Motor neuron (in vitro differentiated cells): ENCODE measurements at regions of chr17 and their contacts with region 1.

Region 1: GRCh38 chr17:8991514-8992285 is 26.2 kb upstream of the PIK3R5 start:
- ATAC-seq: peak in 7 of 8 experiments; percentile 39 to 96 (median 69)
- H3K4me3 ChIP-seq: no peak overlapping the region
- H3K27ac ChIP-seq: no peak overlapping the region
- H3K4me1 ChIP-seq: no peaks in the 10 kb centered on the region

Region 2: DNA sequence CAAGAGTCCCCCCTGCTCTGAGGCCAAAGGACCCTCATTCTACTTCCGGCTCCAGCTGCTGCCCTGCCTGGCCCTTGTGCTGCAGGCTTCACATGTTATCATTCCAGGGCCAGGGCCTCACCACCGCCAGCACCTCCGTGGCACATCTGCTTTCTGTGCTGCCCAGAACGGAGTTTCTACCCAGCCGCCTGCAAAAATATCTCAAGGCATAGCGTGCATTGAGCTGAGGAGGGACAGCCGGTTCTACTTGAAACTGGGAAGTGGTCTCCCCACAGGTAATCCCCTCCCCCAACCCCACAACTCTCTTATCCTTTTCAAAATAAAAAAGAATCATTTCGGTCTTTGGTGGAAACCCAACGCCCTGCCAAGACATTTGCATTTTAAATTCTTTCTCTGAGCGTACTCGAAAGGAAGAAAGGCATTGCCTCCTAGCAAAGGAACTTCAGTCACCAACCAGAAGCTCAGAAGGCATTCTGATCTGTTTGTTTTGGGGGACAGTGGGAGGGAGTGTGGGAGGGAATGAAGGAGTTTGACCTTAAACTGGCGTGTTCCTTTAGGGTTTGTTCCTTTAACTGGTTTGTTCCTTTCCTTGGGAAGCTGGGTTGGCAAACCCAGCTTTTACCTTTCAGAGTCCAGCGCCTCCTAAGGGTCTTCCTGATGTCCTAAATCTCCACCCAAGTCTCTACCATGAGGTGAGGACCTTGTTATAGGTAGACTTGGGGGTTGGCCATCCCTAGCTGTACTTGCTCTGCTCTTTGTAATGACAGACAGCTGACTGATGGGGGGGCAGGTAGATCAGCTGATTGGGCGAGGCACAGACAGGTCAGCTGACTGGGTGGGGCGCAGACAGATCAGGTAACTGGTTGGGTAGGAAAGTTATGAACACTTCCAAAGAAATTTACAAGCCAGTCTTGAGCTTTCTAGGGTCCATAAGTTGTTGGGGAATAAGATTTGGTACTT is 90.8 kb before region 1 on chr17:
- in situ Hi-C with region 1: loop called in 1 of 9 experiments (anchors 10 kb)
- ATAC-seq: peak in 1 of 8 experiments; percentile 39
- H3K4me3 ChIP-seq: no peak overlapping the region
- H3K27ac ChIP-seq: no peak overlapping the region
- H3K4me1 ChIP-seq: no peaks in the 10 kb centered on the region

Region 3: DNA sequence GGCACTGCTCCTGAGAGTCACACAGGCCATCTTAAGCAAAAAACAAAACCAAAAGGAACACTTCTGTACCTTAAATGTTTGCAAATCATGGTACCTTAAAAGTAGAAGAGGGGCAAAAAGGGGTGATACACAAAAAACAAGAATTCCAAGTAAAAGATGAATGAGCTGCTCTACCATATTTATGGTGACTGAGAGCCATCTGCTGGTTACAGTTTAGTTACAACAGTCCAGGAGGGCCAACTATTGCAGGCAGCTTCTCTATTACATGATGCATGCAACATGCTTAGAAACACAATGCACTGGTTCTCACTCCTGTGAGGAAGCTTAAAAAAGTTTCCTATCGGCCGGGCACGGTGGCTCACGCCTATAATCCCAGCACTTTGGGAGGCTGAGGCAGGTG is 530.4 kb after region 1 on chr17:
- in situ Hi-C with region 1: loop called in 6 of 9 experiments (anchors 25 kb)
- ATAC-seq: peak; percentile 26 to 89 (median 66)
- H3K4me3 ChIP-seq: no peak overlapping the region
- H3K27ac ChIP-seq: no peak overlapping the region
- H3K4me1 ChIP-seq: peaks cover 26 to 27% of the 10 kb centered on the region in 2 donors